ENCODE measurements at regions of chr1 and their contacts with region 1.

Region 1: DNA sequence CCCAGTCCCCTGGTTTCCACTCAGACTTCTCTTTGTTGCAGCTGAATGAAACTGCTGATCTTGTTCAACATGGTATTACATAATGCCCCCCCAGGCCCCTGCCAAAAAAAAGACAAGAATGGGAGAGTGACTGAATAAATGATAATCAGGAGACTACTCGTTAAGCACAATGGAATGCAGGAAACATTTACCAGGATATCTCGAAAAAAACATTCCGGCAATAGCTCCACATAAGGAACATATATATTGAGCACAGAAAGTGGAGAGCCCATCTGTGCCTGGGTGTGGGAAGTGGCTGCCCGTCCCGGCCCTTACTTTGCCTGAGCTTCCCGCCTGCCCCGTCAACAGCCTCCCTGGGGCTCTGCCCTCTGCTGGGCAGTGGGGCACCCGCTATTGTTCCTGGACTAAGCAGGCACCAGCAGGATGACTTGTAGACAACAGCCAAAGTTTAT is 13.4 kb downstream of the TRIM11 start:
- DNase-seq: no peak
- ATAC-seq: peak; percentile 73; the same call in 1 of the 2 replicates
- H3K4me3 Mint-ChIP-seq: no peak overlapping the region
- H3K27ac Mint-ChIP-seq: no peak overlapping the region; the same call in 1 of the 2 replicates
- H3K4me1 Mint-ChIP-seq: no peaks in the 10 kb centered on the region
- H3K27me3 Mint-ChIP-seq: no peaks in the 10 kb centered on the region
- CTCF ChIP-seq: no peak

Region 2: GRCh38 chr1:228340686-228341449 is 52.4 kb before region 1 on chr1:
- CTCF ChIA-PET with region 1: interaction called, 12 read pairs
- POLR2A ChIA-PET with region 1: no interaction called
- DNase-seq: peak; percentile 67
- ATAC-seq: peak; percentile 85
- H3K4me3 Mint-ChIP-seq: no peak overlapping the region
- H3K27ac Mint-ChIP-seq: no peak overlapping the region
- H3K4me1 Mint-ChIP-seq: no peaks in the 10 kb centered on the region
- H3K27me3 Mint-ChIP-seq: no peaks in the 10 kb centered on the region
- CTCF ChIP-seq: peak; percentile 36; the same call in 1 of the 2 replicates

Region 3: GRCh38 chr1:228405987-228406265 is 12.7 kb after region 1 on chr1:
- CTCF ChIA-PET with region 1: interaction called, 17 read pairs
- POLR2A ChIA-PET with region 1: interaction called, 4 read pairs
- DNase-seq: no peak
- ATAC-seq: no peak
- H3K4me3 Mint-ChIP-seq: peak overlapping the region; percentile 94
- H3K27ac Mint-ChIP-seq: peak overlapping the region; percentile 86; the same call in 1 of the 2 replicates
- H3K4me1 Mint-ChIP-seq: peaks cover 24% of the 10 kb centered on the region
- H3K27me3 Mint-ChIP-seq: no peaks in the 10 kb centered on the region
- CTCF ChIP-seq: no peak

Region 4: GRCh38 chr1:228445843-228446650 is 52.8 kb after region 1 on chr1:
- CTCF ChIA-PET with region 1: interaction called, 10 read pairs
- POLR2A ChIA-PET with region 1: no interaction called
- DNase-seq: peak; percentile 77
- ATAC-seq: peak; percentile 80
- H3K4me3 Mint-ChIP-seq: peak overlapping the region; percentile 85
- H3K27ac Mint-ChIP-seq: no peak overlapping the region
- H3K4me1 Mint-ChIP-seq: peaks cover 16% of the 10 kb centered on the region
- H3K27me3 Mint-ChIP-seq: peaks cover 76% of the 10 kb centered on the region
- CTCF ChIP-seq: no peak

Region 5: DNA sequence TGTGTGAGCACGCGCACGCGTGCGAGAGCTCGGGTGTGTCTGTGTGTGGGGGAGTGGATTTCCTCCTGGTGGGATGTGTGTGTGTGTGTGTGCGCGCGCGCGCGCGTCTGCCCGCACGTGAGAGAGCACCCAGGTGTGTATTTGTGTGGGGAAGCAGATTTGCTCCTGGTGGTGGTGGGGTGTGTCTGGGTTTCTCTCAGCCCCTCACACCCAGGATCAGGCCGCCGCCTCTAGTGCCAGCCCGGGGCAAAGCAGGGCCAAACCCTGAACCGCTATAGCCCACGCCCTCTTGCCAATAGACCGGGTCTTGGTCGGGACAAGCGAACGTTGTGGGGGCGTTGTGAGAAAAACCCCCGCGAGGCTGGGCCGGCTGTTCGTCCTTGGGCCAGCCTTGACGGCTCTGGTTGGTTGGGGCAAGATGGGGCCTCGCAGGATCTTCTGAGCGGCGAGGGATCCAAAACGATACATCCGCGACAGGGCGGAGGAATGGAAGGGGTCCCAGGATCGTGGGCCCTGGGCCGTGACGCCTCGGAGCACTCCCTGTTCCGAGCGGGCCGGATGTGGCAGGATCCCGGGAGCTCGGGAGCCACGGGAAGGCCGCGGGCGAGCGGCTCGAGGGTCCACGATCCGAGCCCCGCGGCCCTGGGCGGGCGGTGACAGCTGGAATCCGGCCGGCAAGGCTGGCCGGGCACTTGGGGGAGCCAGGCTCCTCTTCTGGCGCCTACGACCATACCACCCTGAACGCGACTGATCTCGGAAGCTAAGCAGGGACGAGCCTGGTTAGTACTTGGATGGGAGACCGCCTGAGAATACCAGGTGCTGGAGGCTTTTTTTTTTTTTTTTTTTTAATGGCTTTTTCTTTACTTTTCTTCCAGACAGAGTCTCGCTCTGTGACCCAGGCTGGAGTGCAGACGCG is 162.1 kb after region 1 on chr1:
- CTCF ChIA-PET with region 1: no interaction called
- POLR2A ChIA-PET with region 1: no interaction called
- DNase-seq: peak; percentile 31
- ATAC-seq: peak; percentile 36; the same call in 1 of the 2 replicates
- H3K4me3 Mint-ChIP-seq: no peak overlapping the region
- H3K27ac Mint-ChIP-seq: no peak overlapping the region
- H3K4me1 Mint-ChIP-seq: no peaks in the 10 kb centered on the region
- H3K27me3 Mint-ChIP-seq: peaks cover 59% of the 10 kb centered on the region
- CTCF ChIP-seq: no peak

Measured in WTC11 (cell line).